K562 (cell line): ENCODE measurements at regions of chr5 and their contacts with region 1.

Region 1: GRCh38 chr5:177113566-177114424 is 19.8 kb upstream of the NSD1 start:
- DNase-seq: peak; percentile 79 to 89 (median 84)
- ATAC-seq: peak; percentile 71
- H3K4me3 ChIP-seq: no peak overlapping the region
- H3K27ac ChIP-seq: no peak overlapping the region
- H3K4me1 ChIP-seq: peaks cover 15 to 29% of the 10 kb centered on the region in 2 experiments; a peak in 4 of 5 replicates
- H3K27me3 ChIP-seq: no peaks in the 10 kb centered on the region
- CTCF ChIP-seq: peak; percentile 94 to 99 (median 98)
- EP300 ChIP-seq: peak; percentile 41; the same call in 1 of the 2 replicates
- POLR2A ChIP-seq: no peak
- RAD21 ChIP-seq: peak; percentile 95 to 96

Region 2: DNA sequence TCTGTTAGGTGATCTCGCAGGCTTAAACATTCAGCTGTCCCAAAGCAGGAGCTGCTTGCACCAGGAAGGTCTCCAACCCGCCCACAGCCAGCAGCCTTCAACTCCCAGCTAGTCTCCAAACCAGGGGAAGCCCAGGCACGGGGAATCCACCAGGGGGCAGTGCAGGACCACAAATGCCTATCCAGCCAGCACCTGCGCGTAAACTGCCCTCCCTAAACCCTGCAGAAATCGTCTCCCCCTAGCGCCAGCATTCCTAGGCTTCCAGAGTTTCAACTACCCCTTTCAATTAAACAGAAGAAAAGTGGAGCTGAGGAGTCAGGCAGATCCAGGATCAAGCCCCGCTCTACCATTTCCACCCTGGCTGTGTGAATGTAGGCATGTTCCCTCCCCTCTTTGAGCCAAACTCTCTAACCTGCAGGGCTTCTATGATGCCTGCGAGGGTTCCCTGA is 1383.9 kb before region 1 on chr5:
- CTCF ChIA-PET with region 1: no interaction called
- POLR2A ChIA-PET with region 1: no interaction called
- in situ Hi-C with region 1: loop called (anchors 25 kb)
- intact Hi-C with region 1: no loop called
- DNase-seq: peak; percentile 88 to 93 (median 92)
- ATAC-seq: peak; percentile 99
- H3K4me3 ChIP-seq: no peak overlapping the region
- H3K27ac ChIP-seq: no peak overlapping the region
- H3K4me1 ChIP-seq: peaks cover 0 to 7% of the 10 kb centered on the region in 2 experiments; a peak in 2 of 5 replicates
- H3K27me3 ChIP-seq: peaks cover 0 to 36% of the 10 kb centered on the region in 2 experiments; a peak in 2 of 5 replicates
- CTCF ChIP-seq: peak; percentile 98 to 99 (median 98)
- EP300 ChIP-seq: no peak
- POLR2A ChIP-seq: no peak
- RAD21 ChIP-seq: peak; percentile 97 to 98

Region 3: GRCh38 chr5:176901260-176902101 is 212.3 kb before region 1 on chr5:
- CTCF ChIA-PET with region 1: no interaction called
- POLR2A ChIA-PET with region 1: no interaction called
- in situ Hi-C with region 1: no loop called
- intact Hi-C with region 1: loop called (anchors 10 kb)
- DNase-seq: no peak
- ATAC-seq: no peak
- H3K4me3 ChIP-seq: no peak overlapping the region
- H3K27ac ChIP-seq: no peak overlapping the region
- H3K4me1 ChIP-seq: no peaks in the 10 kb centered on the region
- H3K27me3 ChIP-seq: peaks cover 2 to 7% of the 10 kb centered on the region in 2 experiments; a peak in 2 of 5 replicates
- CTCF ChIP-seq: no peak
- EP300 ChIP-seq: no peak
- POLR2A ChIP-seq: no peak
- RAD21 ChIP-seq: no peak

Region 4: DNA sequence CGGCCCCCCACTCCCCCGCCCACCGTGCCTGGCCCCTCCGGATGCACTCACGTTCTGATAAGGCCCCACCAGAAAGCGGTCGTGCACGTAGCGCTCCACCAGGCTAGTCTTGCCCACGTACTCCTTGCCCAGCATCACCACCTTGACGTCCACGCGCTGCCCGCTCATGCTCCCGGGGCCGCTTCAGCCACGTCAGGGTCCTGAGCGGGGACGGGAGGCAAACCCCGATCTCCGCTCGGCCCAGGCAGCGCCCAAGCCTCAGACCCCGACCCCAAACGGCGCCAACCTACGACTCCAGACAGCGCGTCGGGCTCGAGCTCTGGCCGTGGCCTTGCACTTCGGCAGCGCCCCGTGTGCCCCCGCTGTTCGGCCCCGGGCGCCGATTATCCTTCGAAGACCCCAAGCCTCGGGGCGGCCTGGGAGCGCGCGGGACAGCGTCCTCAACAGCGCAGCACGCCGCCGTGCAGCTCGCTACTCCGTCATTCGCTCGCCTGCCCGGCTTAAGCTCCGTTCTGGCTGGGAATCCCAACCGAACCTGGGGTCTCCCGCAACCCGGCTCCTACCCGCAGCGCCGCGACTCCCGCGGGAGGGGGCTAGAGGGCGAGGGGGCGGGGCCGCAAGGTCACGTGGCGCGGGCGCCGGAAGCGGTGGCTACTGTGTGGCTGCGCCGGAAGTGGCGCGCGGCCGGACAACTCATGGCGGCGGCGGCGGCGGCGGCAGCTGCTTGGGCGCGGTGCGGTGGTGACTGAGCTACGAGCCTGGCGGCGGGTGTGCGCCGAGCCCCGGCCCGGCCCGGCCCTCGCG is 189.5 kb after region 1 on chr5 and contains the starts of genes PRELID1 and RAB24:
- CTCF ChIA-PET with region 1: interaction called, 3 read pairs
- POLR2A ChIA-PET with region 1: interaction called, 4 read pairs
- in situ Hi-C with region 1: no loop called
- intact Hi-C with region 1: loop called (anchors 1 kb)
- DNase-seq: peak; percentile 92 to 93 (median 92)
- ATAC-seq: peak; percentile 75
- H3K4me3 ChIP-seq: peak within 1 kb of the TSS; percentile 88
- H3K27ac ChIP-seq: peak within 1 kb of the TSS; percentile 89
- H3K4me1 ChIP-seq: peaks cover 29 to 36% of the 10 kb centered on the region in 2 experiments
- H3K27me3 ChIP-seq: no peaks in the 10 kb centered on the region
- CTCF ChIP-seq: peak in 2 of 3 experiments; percentile 19 to 38; a peak in 4 of 6 replicates
- EP300 ChIP-seq: no peak
- POLR2A ChIP-seq: peak; percentile 77
- RAD21 ChIP-seq: no peak
- polyA plus RNA-seq, gene PRELID1: 40.1 to 63.7 TPM
- polyA plus RNA-seq, gene RAB24: 13.9 to 15.7 TPM

Region 5: GRCh38 chr5:177362610-177363507 is 249.1 kb after region 1 on chr5:
- CTCF ChIA-PET with region 1: no interaction called
- POLR2A ChIA-PET with region 1: no interaction called
- in situ Hi-C with region 1: no loop called
- intact Hi-C with region 1: loop called (anchors 10 kb)
- DNase-seq: peak; percentile 83 to 86 (median 85)
- ATAC-seq: peak; percentile 68
- H3K4me3 ChIP-seq: peak overlapping the region; percentile 45
- H3K27ac ChIP-seq: peak overlapping the region; percentile 67
- H3K4me1 ChIP-seq: peaks cover 44 to 76% of the 10 kb centered on the region in 2 experiments
- H3K27me3 ChIP-seq: no peaks in the 10 kb centered on the region
- CTCF ChIP-seq: no peak
- EP300 ChIP-seq: no peak
- POLR2A ChIP-seq: peak; percentile 56
- RAD21 ChIP-seq: no peak

Region 6: GRCh38 chr5:177454397-177455035 is 340.7 kb after region 1 on chr5:
- CTCF ChIA-PET with region 1: interaction called, 9 read pairs
- POLR2A ChIA-PET with region 1: interaction called, 4 read pairs
- in situ Hi-C with region 1: loop called (anchors 10 kb)
- intact Hi-C with region 1: loop called (anchors 1 kb)
- DNase-seq: peak; percentile 92 to 98 (median 94)
- ATAC-seq: peak; percentile 71
- H3K4me3 ChIP-seq: peak overlapping the region; percentile 88
- H3K27ac ChIP-seq: peak overlapping the region; percentile 91
- H3K4me1 ChIP-seq: peaks cover 0 to 58% of the 10 kb centered on the region in 2 experiments; a peak in 3 of 5 replicates
- H3K27me3 ChIP-seq: no peaks in the 10 kb centered on the region
- CTCF ChIP-seq: peak; percentile 90 to 98 (median 96)
- EP300 ChIP-seq: no peak
- POLR2A ChIP-seq: no peak
- RAD21 ChIP-seq: peak; percentile 95